ENCODE measurements at regions of chr1 and their contacts with region 1.

Region 1: GRCh38 chr1:11645670-11646265 is 8.5 kb downstream of the FBXO2 start:
- DNase-seq: peak; percentile 79 to 89 (median 85)
- H3K4me3 ChIP-seq: no peak overlapping the region
- H3K27ac ChIP-seq: no peak overlapping the region
- H3K4me1 ChIP-seq: peaks cover 13 to 28% of the 10 kb centered on the region in 2 donors
- H3K27me3 ChIP-seq: no peaks in the 10 kb centered on the region
- CTCF ChIP-seq: peak; percentile 55 to 76 (median 66)
- POLR2A ChIP-seq: no peak

Region 2: DNA sequence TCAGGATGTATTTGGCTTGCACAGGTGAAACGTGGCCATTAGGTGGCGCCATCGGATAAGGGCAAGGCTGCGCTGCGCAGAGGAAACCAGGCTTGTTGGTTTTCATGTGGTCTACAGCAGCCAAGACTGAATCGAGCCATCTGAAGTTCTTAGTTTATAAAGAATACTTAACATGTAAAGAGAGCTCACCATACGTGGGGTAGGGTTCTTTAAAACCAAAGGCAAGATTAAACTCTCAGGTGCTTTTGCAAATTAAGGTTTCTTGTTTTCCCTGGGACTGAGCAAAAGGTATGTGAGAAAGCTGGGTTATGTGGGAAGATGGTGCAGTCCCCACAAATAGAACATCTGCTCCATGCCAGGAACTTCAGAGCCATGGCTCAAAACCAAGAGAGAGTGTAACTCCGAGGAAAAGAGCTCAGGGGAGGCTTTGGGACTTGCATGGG is 608.0 kb before region 1 on chr1:
- intact Hi-C with region 1: loop called (anchors 5 to 10 kb)
- DNase-seq: peak; percentile 78 to 95 (median 89)
- H3K4me3 ChIP-seq: no peak overlapping the region
- H3K27ac ChIP-seq: no peak overlapping the region
- H3K4me1 ChIP-seq: no peaks in the 10 kb centered on the region
- H3K27me3 ChIP-seq: no peaks in the 10 kb centered on the region
- CTCF ChIP-seq: peak; percentile 92 to 97 (median 95)
- POLR2A ChIP-seq: no peak

Region 3: DNA sequence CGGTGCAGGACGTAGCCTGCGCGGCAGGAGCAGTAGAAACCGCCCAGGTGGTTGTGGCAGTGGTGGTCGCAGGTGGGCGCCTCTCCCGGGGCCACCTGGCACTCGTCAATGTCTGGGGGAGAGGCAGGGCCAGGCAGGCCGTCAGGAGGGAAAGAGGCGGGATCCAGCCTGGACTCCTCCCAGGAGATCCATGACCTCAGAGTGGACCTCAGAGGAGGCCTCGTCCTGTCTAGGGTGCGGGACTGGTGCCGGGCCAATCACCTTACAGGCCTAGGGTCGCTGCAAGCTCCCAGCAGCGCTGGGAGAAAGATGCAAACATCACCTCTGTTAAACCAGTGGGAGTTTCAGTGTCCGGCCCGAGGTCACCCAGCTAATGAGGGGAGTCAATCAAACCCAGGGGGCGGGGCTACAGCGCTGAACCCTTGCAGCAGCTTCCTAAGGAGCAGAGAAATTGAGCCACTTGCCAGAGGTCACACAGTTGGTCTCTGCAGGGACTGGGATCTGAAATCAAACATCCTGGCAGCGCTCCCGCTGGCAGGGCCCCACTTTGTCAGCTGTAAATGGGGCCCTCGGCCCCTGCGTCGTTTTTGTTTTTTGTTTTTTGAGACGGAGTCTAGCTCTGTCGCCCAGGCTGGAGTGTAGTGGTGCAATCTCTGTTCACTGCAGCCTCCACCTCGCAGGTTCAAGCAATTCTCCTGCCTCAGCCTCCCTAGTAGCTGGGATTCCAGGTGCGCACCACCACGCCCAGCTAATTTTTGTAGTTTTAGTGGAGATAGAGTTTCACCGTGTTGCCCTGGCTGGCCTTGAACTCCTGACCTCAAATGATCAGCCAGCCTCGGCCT is 600.1 kb before region 1 on chr1:
- intact Hi-C with region 1: loop called in 1 of 2 experiments (anchors 10 kb)
- DNase-seq: peak in 1 of 7 donors; percentile 40
- H3K4me3 ChIP-seq: no peak overlapping the region
- H3K27ac ChIP-seq: no peak overlapping the region
- H3K4me1 ChIP-seq: no peaks in the 10 kb centered on the region
- H3K27me3 ChIP-seq: no peaks in the 10 kb centered on the region
- CTCF ChIP-seq: no peak
- POLR2A ChIP-seq: no peak

Region 4: DNA sequence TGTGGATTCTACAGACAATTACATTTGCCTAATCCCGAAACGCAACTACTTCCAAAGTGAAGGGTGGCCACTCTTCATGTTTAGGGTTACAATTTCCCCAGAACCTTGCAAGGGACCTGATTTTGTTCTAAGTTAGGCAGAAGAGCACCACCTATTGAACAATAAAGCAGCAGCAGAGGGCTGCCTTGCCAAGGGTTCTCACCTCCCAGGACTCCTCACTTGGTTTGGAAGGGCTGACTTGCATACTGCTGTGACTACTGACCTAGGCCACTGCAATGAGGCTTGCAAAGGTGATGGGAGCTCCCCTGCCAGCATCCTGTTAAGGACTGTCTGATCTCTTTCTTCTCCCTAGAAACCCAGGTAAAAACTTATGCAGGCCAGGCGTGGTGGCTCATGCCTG is 397.6 kb before region 1 on chr1:
- intact Hi-C with region 1: loop called (anchors 5 kb)
- DNase-seq: no peak
- H3K4me3 ChIP-seq: no peak overlapping the region
- H3K27ac ChIP-seq: peak overlapping the region in 1 of 5 donors; percentile 12
- H3K4me1 ChIP-seq: no peaks in the 10 kb centered on the region
- H3K27me3 ChIP-seq: no peaks in the 10 kb centered on the region
- CTCF ChIP-seq: no peak
- POLR2A ChIP-seq: no peak

Region 5: DNA sequence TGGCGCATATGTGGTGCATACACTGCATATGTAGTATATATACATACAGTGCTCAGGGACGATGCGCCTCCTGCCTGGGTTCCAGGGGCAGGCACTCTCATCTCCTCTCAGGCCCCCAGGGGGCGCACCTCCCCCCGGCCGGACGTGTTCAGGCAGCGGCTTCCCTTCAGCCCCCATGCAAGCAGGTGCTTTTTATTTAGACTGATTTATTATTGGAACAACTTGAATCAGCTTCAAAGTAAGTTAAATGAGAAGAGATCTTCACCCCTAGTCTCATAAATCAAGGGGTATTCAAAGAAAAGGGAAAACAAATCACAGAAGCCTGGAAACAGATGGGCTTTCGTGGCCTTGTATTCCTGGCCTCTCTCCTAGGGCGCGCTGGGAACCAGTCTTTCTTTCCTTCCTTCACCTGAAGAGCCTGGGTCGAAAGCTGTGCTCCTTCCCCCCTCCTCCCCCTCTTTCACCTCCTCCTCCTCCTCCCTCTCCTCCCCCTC is 308.1 kb before region 1 on chr1:
- intact Hi-C with region 1: loop called (anchors 5 kb)
- DNase-seq: peak; percentile 37 to 71 (median 65)
- H3K4me3 ChIP-seq: no peak overlapping the region
- H3K27ac ChIP-seq: no peak overlapping the region
- H3K4me1 ChIP-seq: peaks cover 0 to 9% of the 10 kb centered on the region in 2 donors
- H3K27me3 ChIP-seq: peaks cover 3% of the 10 kb centered on the region
- CTCF ChIP-seq: peak; percentile 62 to 81 (median 72)
- POLR2A ChIP-seq: no peak

Region 6: DNA sequence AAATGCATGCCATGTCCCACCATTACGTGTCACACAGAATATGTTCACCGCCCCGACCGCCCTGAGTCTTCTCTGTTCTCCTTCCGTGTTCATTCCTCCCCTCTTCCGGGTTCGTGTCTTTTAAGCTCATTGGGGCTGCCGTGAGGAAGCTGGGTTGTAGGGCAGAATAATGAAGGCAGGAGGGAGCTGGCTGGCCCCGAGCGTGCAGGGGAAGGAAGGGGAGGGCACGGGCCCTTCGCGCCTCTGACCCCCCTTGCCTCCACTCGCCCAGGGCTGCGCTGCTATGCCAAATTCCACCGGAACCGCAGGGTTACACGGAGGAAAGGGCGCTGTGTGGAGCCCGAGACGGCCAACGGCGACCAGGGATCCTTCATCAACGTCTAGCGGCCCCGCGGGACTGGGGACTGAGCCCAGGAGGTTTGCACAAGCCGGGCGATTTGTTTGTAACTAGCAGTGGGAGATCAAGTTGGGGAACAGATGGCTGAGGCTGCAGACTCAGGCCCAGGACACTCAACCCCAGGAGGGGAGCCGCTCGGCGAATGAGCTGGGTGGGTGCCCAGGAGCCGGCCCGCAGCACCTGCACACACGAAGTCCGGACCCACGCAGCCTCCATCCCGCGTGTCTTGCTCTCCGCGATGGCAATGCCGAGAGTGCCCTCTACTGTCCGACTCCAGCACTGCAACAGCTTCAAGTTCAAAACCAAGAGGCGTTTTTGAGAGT is 73.7 kb after region 1 on chr1:
- intact Hi-C with region 1: loop called in 1 of 2 experiments (anchors 5 kb)
- DNase-seq: peak; percentile 73 to 94 (median 84)
- H3K4me3 ChIP-seq: peak overlapping the region in 2 of 4 donors; percentile 9 to 19
- H3K27ac ChIP-seq: peak overlapping the region in 2 of 5 donors; percentile 60 to 62
- H3K4me1 ChIP-seq: peaks cover 0 to 9% of the 10 kb centered on the region in 2 donors
- H3K27me3 ChIP-seq: no peaks in the 10 kb centered on the region
- CTCF ChIP-seq: peak; percentile 88 to 97 (median 93)
- POLR2A ChIP-seq: no peak

Region 7: GRCh38 chr1:11893907-11894251 is 248.1 kb after region 1 on chr1:
- intact Hi-C with region 1: no loop called
- DNase-seq: peak; percentile 41 to 77 (median 64)
- H3K4me3 ChIP-seq: no peak overlapping the region
- H3K27ac ChIP-seq: no peak overlapping the region
- H3K4me1 ChIP-seq: no peaks in the 10 kb centered on the region
- H3K27me3 ChIP-seq: peaks cover 11% of the 10 kb centered on the region
- CTCF ChIP-seq: peak; percentile 64 to 88 (median 82)
- POLR2A ChIP-seq: no peak

Region 8: DNA sequence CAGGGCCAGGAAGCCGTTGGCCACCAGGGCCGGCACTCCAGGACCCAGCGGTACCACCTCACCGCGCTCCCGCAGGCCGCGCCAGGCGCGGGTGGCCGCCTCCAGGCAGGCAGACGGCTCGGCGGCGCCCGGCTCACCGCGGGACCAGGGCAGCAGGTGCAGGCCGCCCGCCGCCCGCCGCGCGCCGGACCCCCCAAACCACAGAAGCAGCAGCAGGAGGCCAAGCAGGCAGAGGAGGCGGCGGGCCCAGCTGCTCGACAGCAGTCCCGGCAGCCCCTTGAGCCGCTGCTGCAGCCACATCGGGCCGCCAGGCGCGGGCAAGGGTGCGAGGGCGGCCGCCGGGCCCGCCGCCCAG is 280.1 kb after region 1 on chr1:
- intact Hi-C with region 1: no loop called
- DNase-seq: peak in 2 of 7 donors; percentile 26 to 46
- H3K4me3 ChIP-seq: peak overlapping the region in 2 of 4 donors; percentile 26 to 91
- H3K27ac ChIP-seq: peak overlapping the region in 1 of 5 donors; percentile 87
- H3K4me1 ChIP-seq: peaks cover 28 to 40% of the 10 kb centered on the region in 2 donors
- H3K27me3 ChIP-seq: no peaks in the 10 kb centered on the region
- CTCF ChIP-seq: peak in 1 of 6 experiments; percentile 2
- POLR2A ChIP-seq: no peak